ENCODE measurements at regions of chr5 and their contacts with region 1.

Region 1: DNA sequence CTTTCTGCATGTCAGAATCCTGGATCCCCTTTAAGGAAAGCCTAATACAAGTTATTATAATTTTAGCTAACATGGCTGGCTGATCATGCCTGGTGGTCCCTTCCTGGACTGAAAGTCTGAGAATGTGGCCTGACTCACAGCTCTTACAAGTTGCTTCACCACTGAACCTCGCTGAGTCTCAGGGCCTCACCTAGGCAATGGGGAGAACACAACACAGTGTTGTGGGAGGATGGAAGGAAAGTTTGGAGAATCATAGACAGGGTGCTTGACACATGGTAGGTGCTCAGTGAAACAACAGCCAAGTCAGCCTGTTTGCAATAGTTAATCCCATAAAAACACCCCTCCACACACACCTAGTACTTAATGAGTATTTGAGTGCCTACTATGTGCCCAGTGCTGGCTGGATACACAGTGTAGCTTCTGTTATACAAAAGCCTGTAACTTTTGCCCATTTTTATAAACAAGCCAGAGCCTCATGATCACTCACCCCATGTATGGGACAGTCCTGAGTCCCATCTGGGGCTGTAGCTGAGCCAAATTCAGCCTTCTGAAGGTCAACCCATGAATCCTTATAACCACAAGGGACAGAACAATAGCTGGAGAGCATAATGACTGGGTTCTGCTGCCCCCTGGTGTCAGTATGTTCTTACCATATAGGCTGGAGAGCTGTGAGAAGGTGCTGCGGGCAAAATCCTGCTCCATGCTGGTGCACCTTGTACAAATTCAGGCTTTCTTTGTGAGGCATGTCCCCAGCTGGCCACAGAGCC is 3.9 kb downstream of the ACSL6 start:
- DNase-seq: peak; percentile 87
- ATAC-seq: peak; percentile 63
- H3K4me3 Mint-ChIP-seq: no peak overlapping the region
- H3K27ac Mint-ChIP-seq: peak overlapping the region; percentile 44
- H3K4me1 Mint-ChIP-seq: peaks cover 43% of the 10 kb centered on the region
- H3K27me3 Mint-ChIP-seq: peaks cover 34% of the 10 kb centered on the region

Region 2: GRCh38 chr5:131423056-131423455 is 584.5 kb before region 1 on chr5:
- CTCF ChIA-PET with region 1: interaction called, 18 read pairs
- POLR2A ChIA-PET with region 1: no interaction called
- DNase-seq: no peak
- ATAC-seq: no peak
- H3K4me3 Mint-ChIP-seq: no peak overlapping the region
- H3K27ac Mint-ChIP-seq: no peak overlapping the region
- H3K4me1 Mint-ChIP-seq: peaks cover 5% of the 10 kb centered on the region
- H3K27me3 Mint-ChIP-seq: no peaks in the 10 kb centered on the region

Region 3: DNA sequence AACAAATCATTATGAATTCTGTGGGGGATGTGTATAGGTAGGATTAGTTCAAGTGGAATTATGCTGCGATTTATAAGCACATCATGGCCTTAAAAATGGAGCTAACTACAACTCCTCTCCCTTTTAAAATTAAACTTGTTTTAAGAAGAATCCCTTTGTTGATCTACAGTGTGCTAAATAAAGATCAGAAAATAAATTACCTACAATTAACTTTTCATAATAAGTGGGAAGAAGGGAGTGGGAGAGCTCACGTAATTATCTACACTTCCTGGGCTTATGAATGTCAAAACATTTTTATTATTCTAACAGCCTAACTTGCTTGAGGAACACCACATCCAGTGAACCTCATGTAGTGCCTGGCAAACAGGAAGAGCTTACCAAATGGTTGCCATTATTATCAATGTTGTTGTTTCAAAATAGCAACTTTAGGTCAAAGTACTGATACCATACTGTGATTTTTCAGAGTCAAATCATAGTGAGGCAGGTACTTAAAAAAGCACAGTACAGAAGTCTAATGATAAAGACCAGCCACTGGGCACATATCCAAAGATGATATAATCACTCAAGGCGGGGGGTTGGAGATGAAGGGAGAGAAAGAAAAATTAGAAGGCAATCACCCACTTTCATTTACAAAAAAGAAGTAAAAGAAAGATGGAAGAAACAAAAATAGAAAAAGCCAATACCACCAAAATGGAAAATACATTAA is 546.6 kb before region 1 on chr5:
- CTCF ChIA-PET with region 1: no interaction called
- POLR2A ChIA-PET with region 1: no interaction called
- DNase-seq: no peak
- ATAC-seq: no peak
- H3K4me3 Mint-ChIP-seq: no peak overlapping the region
- H3K27ac Mint-ChIP-seq: no peak overlapping the region
- H3K4me1 Mint-ChIP-seq: peaks cover 19% of the 10 kb centered on the region
- H3K27me3 Mint-ChIP-seq: no peaks in the 10 kb centered on the region

Region 4: DNA sequence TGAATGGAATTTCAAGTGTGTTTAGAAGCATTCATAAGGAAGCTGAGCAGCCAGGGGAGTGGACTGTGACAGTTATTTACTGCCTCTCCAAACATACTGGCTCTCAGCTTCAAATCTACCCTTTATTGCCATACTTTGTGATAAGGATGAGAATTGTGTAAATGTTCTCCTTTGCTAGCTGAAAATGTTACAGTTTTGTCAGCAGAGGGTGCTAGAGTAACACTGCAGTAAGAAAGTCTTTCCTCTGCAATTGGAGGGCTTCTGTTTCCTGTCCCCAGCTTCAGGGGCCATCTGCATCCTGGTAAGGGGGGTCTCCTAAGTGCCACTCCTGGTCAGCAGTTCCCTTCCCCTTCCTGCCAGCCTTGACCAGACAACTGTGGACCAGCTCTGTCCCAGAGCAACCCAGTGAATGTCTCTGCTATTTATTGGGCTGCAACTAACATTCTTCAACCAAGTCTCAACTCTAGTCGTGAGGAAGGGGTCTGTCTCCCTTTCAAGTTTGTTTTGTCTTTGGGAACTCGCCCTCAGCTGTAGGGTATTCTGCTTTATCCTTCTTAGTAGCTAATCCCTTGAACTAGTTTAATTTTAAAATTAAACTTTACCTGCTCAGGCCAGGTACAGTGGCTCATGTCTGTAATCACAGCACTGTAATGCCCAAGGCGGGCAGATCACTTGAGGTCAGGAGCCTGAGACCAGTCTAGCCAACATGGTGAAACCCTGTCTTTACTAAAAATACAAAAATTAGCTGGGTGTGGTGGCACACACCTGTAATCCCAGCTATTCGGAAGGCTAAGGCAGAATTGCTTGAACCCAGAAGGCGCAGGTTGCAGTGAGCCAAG is 417.9 kb before region 1 on chr5:
- CTCF ChIA-PET with region 1: interaction called, 169 read pairs
- POLR2A ChIA-PET with region 1: interaction called, 3 read pairs
- DNase-seq: peak; percentile 49
- ATAC-seq: peak; percentile 67
- H3K4me3 Mint-ChIP-seq: no peak overlapping the region
- H3K27ac Mint-ChIP-seq: no peak overlapping the region
- H3K4me1 Mint-ChIP-seq: peaks cover 33% of the 10 kb centered on the region
- H3K27me3 Mint-ChIP-seq: no peaks in the 10 kb centered on the region

Region 5: GRCh38 chr5:131710391-131710790 is 297.2 kb before region 1 on chr5:
- CTCF ChIA-PET with region 1: interaction called, 11 read pairs
- POLR2A ChIA-PET with region 1: no interaction called
- DNase-seq: no peak
- ATAC-seq: no peak
- H3K4me3 Mint-ChIP-seq: no peak overlapping the region
- H3K27ac Mint-ChIP-seq: no peak overlapping the region
- H3K4me1 Mint-ChIP-seq: no peaks in the 10 kb centered on the region
- H3K27me3 Mint-ChIP-seq: no peaks in the 10 kb centered on the region

Region 6: DNA sequence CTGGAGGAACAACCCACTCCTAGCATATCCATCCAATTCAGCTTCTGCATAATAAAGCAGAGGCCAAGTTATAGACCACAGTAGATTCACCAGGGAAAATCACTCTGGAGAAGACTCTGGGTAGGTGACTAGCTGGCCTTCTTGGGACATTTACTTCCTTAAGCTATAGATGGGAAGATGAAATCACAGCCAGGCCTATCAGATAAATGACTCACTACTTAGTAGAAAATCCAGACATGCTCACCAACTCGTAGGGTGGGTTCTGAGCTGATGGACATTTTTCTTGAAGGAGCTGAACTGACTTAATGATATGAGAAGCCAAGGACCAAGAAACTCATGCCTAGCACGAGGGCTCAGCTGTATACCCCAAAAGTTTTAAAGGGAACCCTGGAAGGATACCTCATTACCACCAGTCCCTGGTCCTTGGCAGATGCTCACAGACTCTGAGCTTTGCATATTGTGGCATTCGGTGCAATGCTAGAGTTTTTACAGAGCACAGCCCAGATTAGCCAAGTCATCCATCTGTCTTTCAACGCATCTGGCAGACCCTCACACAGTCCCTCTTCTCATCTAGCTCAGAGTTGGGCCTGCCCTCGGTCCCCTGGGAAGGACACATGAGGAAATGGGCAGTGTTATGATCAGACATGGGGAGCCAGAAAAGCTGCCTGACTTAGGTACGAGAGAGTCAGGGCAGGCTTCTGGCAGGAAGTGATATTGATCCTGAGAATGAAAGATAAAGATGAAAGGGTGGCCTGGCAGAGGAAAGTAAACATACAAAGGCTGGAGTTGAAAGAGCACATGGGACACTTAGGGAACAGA is 11.2 kb before region 1 on chr5:
- CTCF ChIA-PET with region 1: interaction called, 17 read pairs
- POLR2A ChIA-PET with region 1: interaction called, 3 read pairs
- DNase-seq: no peak
- ATAC-seq: no peak
- H3K4me3 Mint-ChIP-seq: no peak overlapping the region
- H3K27ac Mint-ChIP-seq: peak overlapping the region; percentile 48
- H3K4me1 Mint-ChIP-seq: peaks cover 50% of the 10 kb centered on the region
- H3K27me3 Mint-ChIP-seq: no peaks in the 10 kb centered on the region

Region 7: GRCh38 chr5:132055808-132056609 is 48.4 kb after region 1 on chr5:
- CTCF ChIA-PET with region 1: interaction called, 29 read pairs
- POLR2A ChIA-PET with region 1: no interaction called
- DNase-seq: peak; percentile 74
- ATAC-seq: peak; percentile 69
- H3K4me3 Mint-ChIP-seq: no peak overlapping the region
- H3K27ac Mint-ChIP-seq: peak overlapping the region; percentile 84
- H3K4me1 Mint-ChIP-seq: peaks cover 74% of the 10 kb centered on the region
- H3K27me3 Mint-ChIP-seq: peaks cover 19% of the 10 kb centered on the region